WTC11 (cell line): ENCODE measurements at regions of chr7 and their contacts with region 1.

Region 1: GRCh38 chr7:47482013-47482875 is 99.7 kb downstream of the TNS3 start:
- DNase-seq: no peak
- ATAC-seq: no peak
- H3K4me3 Mint-ChIP-seq: no peak overlapping the region
- H3K27ac Mint-ChIP-seq: no peak overlapping the region
- H3K4me1 Mint-ChIP-seq: peaks cover 54% of the 10 kb centered on the region
- H3K27me3 Mint-ChIP-seq: peaks cover 88% of the 10 kb centered on the region
- CTCF ChIP-seq: no peak

Region 2: GRCh38 chr7:47493976-47494911 is 12.0 kb after region 1 on chr7:
- CTCF ChIA-PET with region 1: interaction called, 11 read pairs
- POLR2A ChIA-PET with region 1: no interaction called
- DNase-seq: no peak
- ATAC-seq: no peak; the same call in 1 of the 2 replicates
- H3K4me3 Mint-ChIP-seq: peak overlapping the region; percentile 26
- H3K27ac Mint-ChIP-seq: peak overlapping the region; percentile 88
- H3K4me1 Mint-ChIP-seq: peaks cover 77% of the 10 kb centered on the region
- H3K27me3 Mint-ChIP-seq: no peaks in the 10 kb centered on the region; the same call in 1 of the 2 replicates
- CTCF ChIP-seq: no peak